ENCODE measurements at regions of chr14 and their contacts with region 1.

Region 1: DNA sequence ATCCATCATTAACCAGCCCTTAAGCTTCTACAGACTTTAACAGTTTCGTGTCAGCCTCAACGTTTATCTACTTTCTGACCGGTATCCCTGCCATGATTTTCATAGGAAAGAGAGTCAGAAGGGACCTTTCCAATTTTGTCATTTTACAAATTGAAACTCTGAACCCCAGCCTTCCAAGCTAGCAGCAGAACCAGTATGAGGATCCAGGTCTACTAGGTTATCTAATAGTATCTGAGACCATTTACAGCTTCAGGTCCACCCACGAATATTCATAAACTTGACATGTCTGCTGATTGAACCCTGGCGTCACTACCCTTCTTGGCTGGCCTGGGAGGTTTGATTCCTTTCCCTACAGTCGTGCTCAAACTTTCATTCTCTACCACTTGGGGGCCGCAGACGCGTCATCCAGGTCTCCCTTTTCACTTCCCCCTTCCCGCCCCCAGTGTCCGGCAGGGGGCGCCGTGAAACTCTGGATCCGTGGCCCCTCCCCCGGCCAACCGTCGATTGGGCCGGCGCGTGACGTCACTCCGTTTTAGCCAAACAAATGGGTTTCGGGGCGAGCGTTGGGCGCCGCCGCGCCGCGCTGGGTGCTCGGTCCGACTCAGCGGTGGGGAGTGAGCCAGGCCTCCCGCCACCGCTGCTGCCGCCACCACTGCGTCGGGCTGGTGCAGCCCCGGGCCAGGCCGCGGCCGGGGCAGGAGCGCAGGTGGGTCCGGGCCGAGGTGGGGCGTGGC is at the start of gene FBXO34:
- DNase-seq: peak; percentile 97 to 100 (median 99)

Region 2: DNA sequence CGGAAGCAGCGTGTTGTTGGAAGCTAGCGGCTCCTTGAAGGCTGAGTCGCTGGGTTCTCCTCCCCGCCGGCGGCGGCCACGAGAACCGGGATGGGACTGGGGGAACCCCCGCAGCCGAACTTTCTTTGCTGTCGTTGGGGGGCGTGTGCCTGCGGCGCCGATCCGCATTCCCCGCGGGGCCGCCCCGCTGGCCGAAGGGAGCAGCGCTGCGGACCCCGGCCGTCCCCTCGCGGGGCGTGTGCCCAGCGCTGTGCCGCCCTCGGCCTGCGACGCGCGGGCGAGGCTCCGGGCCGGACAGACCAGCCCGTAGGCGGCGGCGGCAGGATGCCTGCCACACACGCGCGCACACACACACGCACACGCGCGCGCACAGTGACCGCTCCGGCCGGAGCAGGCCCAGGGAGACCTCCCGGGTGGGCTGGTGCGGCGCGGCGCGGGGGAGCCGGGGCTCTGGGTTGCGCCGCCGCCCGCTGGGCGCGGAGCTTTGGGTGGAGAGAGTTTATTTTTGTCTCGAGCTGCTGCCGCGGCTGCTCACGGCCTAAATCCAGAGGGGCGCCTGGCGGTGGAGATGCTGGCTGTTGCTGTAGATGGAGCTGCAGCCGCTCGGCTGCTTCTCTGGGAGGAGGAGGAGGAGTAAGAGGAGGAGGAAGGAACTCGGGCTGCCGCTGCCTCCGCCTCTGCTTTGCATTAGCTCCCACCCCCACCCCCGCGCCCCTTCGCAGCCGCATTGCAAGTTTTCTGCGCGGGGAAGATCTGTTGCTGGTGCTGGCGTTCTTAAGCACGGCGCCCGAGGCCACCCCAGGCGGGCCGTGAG is 704.4 kb before region 1 on chr14 and contains the start of gene SAMD4A:
- intact Hi-C with region 1: loop called (anchors 10 kb)
- DNase-seq: peak; percentile 51 to 88 (median 74)

Region 3: GRCh38 chr14:55077691-55078151 is 193.3 kb before region 1 on chr14:
- intact Hi-C with region 1: no loop called
- DNase-seq: peak in 1 of 42 donors; percentile 12

Region 4: GRCh38 chr14:55354500-55354899 is 83.5 kb after region 1 on chr14:
- intact Hi-C with region 1: loop called (anchors 5 kb)
- DNase-seq: peak; percentile 31 to 88 (median 68)

Region 5: DNA sequence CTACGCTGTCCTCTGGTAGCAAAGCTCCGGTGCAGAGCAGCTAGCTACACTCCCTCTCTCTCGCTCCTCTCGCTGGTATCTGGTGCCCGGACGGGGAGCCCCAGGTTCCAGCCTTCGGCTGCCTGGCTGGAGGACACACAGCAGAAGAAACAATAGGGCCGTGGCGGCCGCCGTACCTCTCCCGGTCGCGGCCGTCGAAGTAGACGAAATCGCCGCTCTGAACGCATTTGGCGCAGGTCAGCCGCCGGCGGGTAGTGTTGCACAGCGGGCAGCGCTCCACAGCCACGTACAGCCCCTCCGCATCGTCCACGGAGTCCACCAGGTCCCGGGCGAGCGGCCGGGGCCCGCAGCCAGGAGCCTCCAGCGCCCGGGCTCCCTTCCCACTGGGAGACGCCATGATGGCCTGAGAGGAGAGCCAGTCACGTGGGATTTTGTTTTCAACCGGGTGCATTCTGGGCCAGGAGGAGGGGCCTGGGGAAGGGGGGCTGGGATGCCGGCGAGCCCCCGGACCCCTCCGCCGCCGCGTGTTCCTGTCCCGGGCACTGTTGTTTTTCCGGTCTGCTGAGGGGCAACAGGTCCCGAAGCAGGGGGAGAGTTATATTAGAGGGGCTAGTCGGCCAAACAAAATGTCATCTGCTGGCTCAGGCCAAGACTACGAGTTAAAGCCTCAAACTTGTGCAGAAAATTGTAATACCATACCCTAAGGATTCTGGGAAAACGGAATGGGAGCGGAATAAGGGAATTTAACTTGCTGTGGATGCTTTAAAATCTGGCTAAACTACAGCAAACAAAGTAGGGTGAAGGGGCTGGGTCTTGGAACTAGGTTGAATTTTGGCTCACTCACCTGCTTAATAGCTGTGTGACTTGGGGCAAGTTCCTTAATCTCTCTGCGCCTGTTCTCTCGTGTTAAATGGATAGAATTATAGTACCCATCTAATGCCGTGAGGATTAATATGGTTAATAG is 140.7 kb after region 1 on chr14 and contains the start of gene ATG14:
- intact Hi-C with region 1: loop called (anchors 10 kb)
- DNase-seq: peak; percentile 79 to 97 (median 91)

Region 6: DNA sequence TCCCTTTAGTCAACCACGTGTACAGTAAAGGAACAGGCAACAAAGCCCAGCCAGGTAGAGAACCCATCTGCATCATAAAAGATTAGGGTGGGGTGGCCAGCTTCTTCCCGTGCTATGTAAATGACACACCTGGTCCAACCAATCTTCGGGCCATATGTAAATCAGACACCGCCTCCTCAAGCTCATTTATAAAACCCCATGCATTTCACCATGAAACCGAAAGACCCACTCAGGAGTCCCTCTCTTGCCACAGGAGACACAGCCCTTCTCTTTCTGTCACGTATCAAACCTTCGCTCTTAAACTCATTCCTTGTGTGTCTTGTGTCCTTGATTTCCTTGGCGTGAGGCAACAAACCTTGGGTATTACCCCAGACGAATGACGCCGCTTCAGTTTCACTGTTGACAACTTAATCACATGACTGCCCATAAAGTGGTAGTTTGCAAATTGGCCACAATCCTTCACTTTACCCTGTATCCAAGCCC is 229.3 kb after region 1 on chr14:
- intact Hi-C with region 1: no loop called
- DNase-seq: no peak